Activated CD4-positive, alpha-beta T cell treated with anti-CD3 and anti-CD28 coated beads, Interleukin-2, amount 10 ng/mL, durations not matched to agents 24 days and 14 days (primary cell): ENCODE measurements at regions of chr22 and their contacts with region 1.

Region 1: GRCh38 chr22:20079745-20080444 is at the start of gene DGCR8:
- DNase-seq: peak; percentile 93
- H3K4me3 Mint-ChIP-seq: peak within 1 kb of the TSS; percentile 91
- H3K27ac Mint-ChIP-seq: peak within 1 kb of the TSS; percentile 85
- H3K4me1 Mint-ChIP-seq: peaks cover 33% of the 10 kb centered on the region
- H3K27me3 Mint-ChIP-seq: no peaks in the 10 kb centered on the region
- total RNA-seq, gene DGCR8: 73.2 and 74.2 TPM in 2 replicates

Region 2: GRCh38 chr22:19962233-19962908 is 117.5 kb before region 1 on chr22:
- intact Hi-C with region 1: no loop called
- DNase-seq: peak; percentile 85
- H3K4me3 Mint-ChIP-seq: no peak overlapping the region
- H3K27ac Mint-ChIP-seq: no peak overlapping the region
- H3K4me1 Mint-ChIP-seq: peaks cover 2% of the 10 kb centered on the region
- H3K27me3 Mint-ChIP-seq: no peaks in the 10 kb centered on the region

Region 3: DNA sequence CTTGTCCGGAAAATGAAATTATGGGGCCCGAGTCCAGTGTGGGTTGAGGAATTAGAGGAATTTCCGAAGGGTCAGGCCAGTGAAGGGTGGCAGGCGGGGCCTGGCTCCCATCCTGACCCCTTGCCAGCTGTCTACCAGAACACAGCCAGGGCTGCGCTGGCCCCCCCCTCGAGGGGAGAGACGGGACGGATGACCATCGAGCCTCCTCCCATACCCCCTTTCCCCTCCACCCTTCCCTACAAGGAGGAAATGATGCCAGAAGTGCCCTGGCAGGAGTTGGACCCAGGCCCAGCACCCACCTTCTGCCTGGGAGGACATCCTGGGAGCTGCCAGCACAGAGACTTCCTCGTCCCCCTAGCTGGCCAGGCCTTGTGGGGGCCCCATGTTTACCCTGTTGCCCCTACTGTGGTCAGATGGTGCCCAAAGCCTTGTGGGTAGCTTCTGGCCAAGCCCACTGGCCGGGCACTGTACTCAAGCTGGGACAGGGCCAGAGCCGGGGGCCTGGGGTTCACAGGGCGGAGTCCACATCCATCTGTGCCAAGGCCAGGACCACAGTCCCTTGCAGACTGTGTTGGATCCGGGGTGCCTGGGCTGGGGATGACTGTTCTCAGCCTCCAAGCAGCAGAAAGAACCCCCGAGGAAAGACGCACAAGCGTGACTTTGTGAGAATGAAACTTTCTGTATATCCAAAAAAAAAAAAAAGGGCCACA is 84.1 kb before region 1 on chr22:
- intact Hi-C with region 1: no loop called
- DNase-seq: no peak
- H3K4me3 Mint-ChIP-seq: no peak overlapping the region
- H3K27ac Mint-ChIP-seq: no peak overlapping the region
- H3K4me1 Mint-ChIP-seq: no peaks in the 10 kb centered on the region
- H3K27me3 Mint-ChIP-seq: no peaks in the 10 kb centered on the region

Region 4: GRCh38 chr22:20016734-20017621 is 62.9 kb before region 1 on chr22 and contains the start of gene ARVCF:
- intact Hi-C with region 1: loop called (anchors 2 kb)
- DNase-seq: peak; percentile 98
- H3K4me3 Mint-ChIP-seq: peak within 1 kb of the TSS; percentile 89
- H3K27ac Mint-ChIP-seq: no peak within 1 kb of the TSS
- H3K4me1 Mint-ChIP-seq: peaks cover 16% of the 10 kb centered on the region
- H3K27me3 Mint-ChIP-seq: peaks cover 25% of the 10 kb centered on the region
- total RNA-seq, gene ARVCF: 2.6 and 4.1 TPM in 2 replicates

Region 5: GRCh38 chr22:20102203-20102780 is 22.4 kb after region 1 on chr22:
- intact Hi-C with region 1: loop called (anchors 1 kb)
- DNase-seq: no peak
- H3K4me3 Mint-ChIP-seq: peak overlapping the region; percentile 24
- H3K27ac Mint-ChIP-seq: peak overlapping the region; percentile 94
- H3K4me1 Mint-ChIP-seq: peaks cover 52% of the 10 kb centered on the region
- H3K27me3 Mint-ChIP-seq: no peaks in the 10 kb centered on the region

Region 6: GRCh38 chr22:20205964-20206708 is 126.2 kb after region 1 on chr22:
- intact Hi-C with region 1: no loop called
- DNase-seq: peak; percentile 92
- H3K4me3 Mint-ChIP-seq: peak overlapping the region; percentile 92
- H3K27ac Mint-ChIP-seq: peak overlapping the region; percentile 89
- H3K4me1 Mint-ChIP-seq: peaks cover 14% of the 10 kb centered on the region
- H3K27me3 Mint-ChIP-seq: no peaks in the 10 kb centered on the region

Region 7: DNA sequence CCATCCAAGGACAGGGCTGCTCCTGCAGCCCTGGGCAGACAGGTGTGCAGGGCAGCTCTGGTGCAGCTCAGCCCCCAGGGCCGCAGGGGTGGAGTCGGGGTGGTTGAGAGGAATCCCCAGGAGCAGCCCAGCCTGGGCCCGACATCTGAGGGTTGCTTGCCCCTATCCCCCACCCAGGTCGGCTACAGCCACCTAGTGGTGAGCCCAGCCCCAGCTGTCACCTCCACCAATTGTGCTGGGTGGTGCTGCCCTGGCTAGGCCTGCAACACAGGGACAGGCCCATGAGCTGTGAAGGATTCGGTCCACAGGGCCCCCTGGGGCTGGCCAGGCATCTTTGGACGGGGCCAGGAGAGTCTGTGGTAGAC is 158.6 kb after region 1 on chr22:
- intact Hi-C with region 1: no loop called
- DNase-seq: peak; percentile 87
- H3K4me3 Mint-ChIP-seq: no peak overlapping the region
- H3K27ac Mint-ChIP-seq: peak overlapping the region; percentile 65
- H3K4me1 Mint-ChIP-seq: peaks cover 8% of the 10 kb centered on the region
- H3K27me3 Mint-ChIP-seq: no peaks in the 10 kb centered on the region